ENCODE measurements at regions of chr2 and their contacts with region 1.

Region 1: GRCh38 chr2:231482806-231483391 is 18.6 kb upstream of the NCL start:
- DNase-seq: no peak
- H3K4me3 ChIP-seq: peak overlapping the region; percentile 34 to 69 (median 48)
- H3K27ac ChIP-seq: peak overlapping the region; percentile 65 to 84 (median 80)
- H3K4me1 ChIP-seq: peaks cover 3 to 20% (median 5%) of the 10 kb centered on the region in 3 donors
- H3K27me3 ChIP-seq: no peaks in the 10 kb centered on the region
- CTCF ChIP-seq: peak; percentile 64 to 89 (median 84)
- POLR2A ChIP-seq: no peak

Region 2: GRCh38 chr2:231557571-231558237 is 74.8 kb after region 1 on chr2:
- intact Hi-C with region 1: loop called (anchors 10 kb)
- DNase-seq: peak; percentile 14
- H3K4me3 ChIP-seq: no peak overlapping the region
- H3K27ac ChIP-seq: peak overlapping the region in 3 of 4 donors; percentile 21 to 64 (median 57)
- H3K4me1 ChIP-seq: peaks cover 6 to 25% (median 14%) of the 10 kb centered on the region in 3 donors
- H3K27me3 ChIP-seq: no peaks in the 10 kb centered on the region
- CTCF ChIP-seq: peak; percentile 30 to 82 (median 47)
- POLR2A ChIP-seq: no peak

Measured in esophagus squamous epithelium (tissue), 5 donors.